HCT116 (cell line): ENCODE measurements at regions of chr4 and their contacts with region 1.

Region 1: GRCh38 chr4:88818631-88819470 is 121.2 kb upstream of the NAP1L5 start:
- DNase-seq: peak; percentile 31
- ATAC-seq: peak; percentile 73
- H3K4me3 ChIP-seq: no peak overlapping the region
- H3K27ac ChIP-seq: no peak overlapping the region
- H3K4me1 ChIP-seq: peaks cover 6 to 11% of the 10 kb centered on the region in 2 experiments; a peak in 3 of 4 replicates
- H3K27me3 ChIP-seq: no peaks in the 10 kb centered on the region
- CTCF ChIP-seq: peak; percentile 49 to 68 (median 60); a peak in 4 of 6 replicates
- POLR2A ChIP-seq: no peak
- RAD21 ChIP-seq: peak; percentile 86

Region 2: DNA sequence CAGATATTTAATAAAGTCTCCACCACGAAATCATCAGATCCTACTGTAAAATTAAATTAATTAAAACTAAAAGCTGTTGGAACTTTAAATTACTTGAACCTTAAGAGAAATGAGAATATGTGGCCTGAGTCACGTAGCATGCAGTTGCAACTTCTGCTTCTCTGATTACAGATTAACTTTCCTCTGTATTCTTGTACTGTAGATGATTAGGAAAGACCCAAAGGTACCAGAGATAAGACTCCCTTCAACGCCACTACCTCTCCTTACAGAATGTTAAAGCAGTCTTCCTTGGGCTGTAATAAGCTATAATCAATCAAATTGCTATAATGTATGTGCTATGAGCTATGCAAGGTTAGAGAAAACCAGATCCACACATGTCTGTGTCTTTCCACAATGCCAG is 190.3 kb after region 1 on chr4:
- CTCF ChIA-PET with region 1: no interaction called
- POLR2A ChIA-PET with region 1: no interaction called
- RAD21 ChIA-PET with region 1: no interaction called
- intact Hi-C with region 1: no loop called
- DNase-seq: no peak
- ATAC-seq: no peak
- H3K4me3 ChIP-seq: no peak overlapping the region
- H3K27ac ChIP-seq: no peak overlapping the region
- H3K4me1 ChIP-seq: no peaks in the 10 kb centered on the region
- H3K27me3 ChIP-seq: no peaks in the 10 kb centered on the region
- CTCF ChIP-seq: no peak
- POLR2A ChIP-seq: no peak
- RAD21 ChIP-seq: no peak

Region 3: GRCh38 chr4:89110986-89111832 is 292.4 kb after region 1 on chr4 and contains the start of gene TIGD2:
- CTCF ChIA-PET with region 1: no interaction called
- POLR2A ChIA-PET with region 1: no interaction called
- RAD21 ChIA-PET with region 1: no interaction called
- intact Hi-C with region 1: loop called (anchors 2 kb)
- DNase-seq: peak; percentile 71
- ATAC-seq: peak; percentile 96
- H3K4me3 ChIP-seq: peak within 1 kb of the TSS; percentile 70 to 71
- H3K27ac ChIP-seq: peak within 1 kb of the TSS; percentile 68
- H3K4me1 ChIP-seq: peaks cover 3 to 18% of the 10 kb centered on the region in 2 experiments; a peak in 3 of 4 replicates
- H3K27me3 ChIP-seq: no peaks in the 10 kb centered on the region
- CTCF ChIP-seq: peak; percentile 28 to 78 (median 58); a peak in 5 of 6 replicates
- POLR2A ChIP-seq: peak; percentile 72
- RAD21 ChIP-seq: peak; percentile 70
- total RNA-seq, gene TIGD2: 10.3 TPM

Region 4: DNA sequence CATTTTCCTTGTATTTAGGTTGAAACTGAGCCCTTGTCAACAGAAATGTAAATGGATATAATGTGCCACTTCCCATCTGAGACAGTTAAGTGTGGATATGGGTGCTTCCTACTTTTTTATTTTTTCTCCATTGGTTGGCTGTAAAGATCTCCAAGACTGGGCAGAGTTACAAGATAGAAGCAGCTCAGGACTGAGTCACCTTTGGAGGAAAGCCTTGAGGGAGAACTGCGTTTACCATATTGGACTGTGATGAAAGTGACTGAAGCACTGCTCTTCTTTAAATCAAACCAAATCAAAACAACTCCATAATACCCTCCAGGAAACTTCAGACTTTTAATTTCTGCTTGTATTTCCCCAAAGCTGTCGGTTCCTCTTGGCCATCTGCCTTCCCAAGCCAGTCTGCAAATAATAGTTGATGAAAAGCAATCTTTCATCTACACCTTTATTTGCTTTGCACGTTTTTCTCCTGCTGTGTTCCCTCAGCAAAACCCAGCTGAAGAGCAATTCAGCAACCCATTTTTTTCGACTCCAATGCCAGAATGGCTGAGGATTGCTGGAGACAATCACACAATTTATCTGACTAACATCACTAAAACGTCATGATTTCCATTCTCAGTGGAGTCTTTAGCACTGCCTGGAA is 394.3 kb after region 1 on chr4:
- CTCF ChIA-PET with region 1: no interaction called
- POLR2A ChIA-PET with region 1: no interaction called
- RAD21 ChIA-PET with region 1: no interaction called
- intact Hi-C with region 1: no loop called
- DNase-seq: no peak
- ATAC-seq: no peak
- H3K4me3 ChIP-seq: no peak overlapping the region
- H3K27ac ChIP-seq: no peak overlapping the region
- H3K4me1 ChIP-seq: no peaks in the 10 kb centered on the region
- H3K27me3 ChIP-seq: no peaks in the 10 kb centered on the region
- CTCF ChIP-seq: no peak
- POLR2A ChIP-seq: no peak
- RAD21 ChIP-seq: no peak